Activated T-helper 1 cell treated with anti-CD3 and anti-CD28 coated beads, Interleukin-12 subunit alpha, Interleukin-12 subunit beta, Interleukin-2, Interleukin-4 antibody, amounts not matched to agents 30 ng/mL and 10 ng/mL and 1 ng/mL, durations not matched to agents 14 hours and 24 hours and 36 hours (primary cell): ENCODE measurements at regions of chrX and their contacts with region 1.

Region 1: DNA sequence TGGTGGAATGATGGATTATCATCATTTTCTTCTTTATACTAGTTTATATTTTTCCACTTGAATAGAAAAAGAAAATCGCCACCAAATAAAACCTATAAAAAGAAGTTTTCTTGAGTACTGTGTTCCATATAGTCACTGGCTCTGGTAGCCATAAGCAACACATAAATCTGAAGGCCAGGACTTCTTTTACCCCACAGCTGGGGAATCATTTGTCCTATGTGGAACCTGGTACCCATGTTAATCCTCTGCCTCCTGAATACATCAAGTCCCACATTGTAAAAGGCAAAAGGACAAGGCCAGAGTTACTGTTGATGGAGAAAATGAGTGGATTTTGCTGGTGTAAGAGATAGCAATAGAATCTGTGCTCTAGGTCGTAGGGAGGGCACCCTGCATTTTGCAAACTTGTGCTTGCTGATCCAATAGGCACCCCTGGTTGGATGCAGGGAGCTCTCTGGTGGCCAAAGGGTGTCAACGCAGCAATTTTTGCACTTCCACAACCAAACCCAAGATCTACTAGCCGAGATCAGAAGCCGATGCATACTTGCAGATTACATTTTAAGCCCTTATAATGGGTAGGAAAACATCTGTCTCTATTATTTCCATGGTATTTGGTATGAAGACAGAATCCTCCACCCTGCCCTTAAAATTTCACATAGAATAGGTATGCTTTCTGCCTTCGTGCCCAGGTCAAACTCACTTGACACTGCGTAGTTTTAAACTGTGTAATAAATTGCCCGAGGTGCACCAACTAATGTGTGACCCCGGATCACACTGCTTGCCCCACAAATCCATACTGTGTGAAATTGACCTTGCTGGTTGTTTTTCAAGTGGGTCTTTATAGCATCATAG is 146.2 kb upstream of the SCML1 start:
- DNase-seq: peak; percentile 6
- H3K4me3 Mint-ChIP-seq: no peak overlapping the region
- H3K27ac Mint-ChIP-seq: no peak overlapping the region
- H3K4me1 Mint-ChIP-seq: peaks cover 23% of the 10 kb centered on the region
- H3K27me3 Mint-ChIP-seq: no peaks in the 10 kb centered on the region

Region 2: DNA sequence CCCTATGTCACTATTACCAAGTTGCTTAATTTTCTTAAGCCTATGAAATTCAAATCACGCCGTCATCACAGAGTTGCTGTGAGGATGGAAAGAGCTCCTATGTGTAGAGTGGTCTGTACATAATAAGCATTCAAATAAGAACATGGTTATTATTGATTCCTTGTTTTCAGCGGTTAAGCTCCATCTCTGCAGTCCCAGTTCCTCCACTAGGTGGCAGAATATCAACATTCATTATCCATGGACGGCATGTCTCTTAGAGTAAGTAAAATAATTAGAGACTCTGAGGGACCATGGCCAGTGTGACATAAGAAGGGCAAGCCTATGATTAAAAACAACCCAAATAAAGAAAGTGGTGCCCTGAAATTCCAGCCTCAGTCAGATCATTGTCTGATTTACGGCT is 348.6 kb before region 1 on chrX:
- intact Hi-C with region 1: loop called (anchors 1 kb)
- DNase-seq: no peak
- H3K4me3 Mint-ChIP-seq: no peak overlapping the region
- H3K27ac Mint-ChIP-seq: no peak overlapping the region
- H3K4me1 Mint-ChIP-seq: no peaks in the 10 kb centered on the region
- H3K27me3 Mint-ChIP-seq: no peaks in the 10 kb centered on the region

Region 3: DNA sequence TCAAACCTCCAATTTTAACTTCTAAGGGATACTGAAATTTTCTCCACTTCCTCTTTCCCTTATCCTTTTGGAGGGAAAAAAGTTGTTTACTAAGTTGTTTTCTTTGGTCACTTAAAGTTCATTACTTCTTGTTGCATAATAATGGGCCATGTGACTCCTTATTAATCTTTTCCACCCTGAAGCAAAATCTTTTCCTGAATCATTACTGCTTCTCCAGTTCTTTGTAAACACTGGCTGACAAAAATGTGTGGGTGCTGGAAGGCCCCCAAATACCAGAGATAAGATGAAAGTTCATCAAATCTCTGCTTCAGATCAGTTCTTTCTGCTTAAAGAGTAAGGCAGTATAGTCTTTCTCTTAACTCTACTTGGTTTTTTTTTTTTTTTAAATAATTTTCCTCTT is 325.0 kb before region 1 on chrX:
- intact Hi-C with region 1: no loop called
- DNase-seq: no peak
- H3K4me3 Mint-ChIP-seq: no peak overlapping the region
- H3K27ac Mint-ChIP-seq: no peak overlapping the region
- H3K4me1 Mint-ChIP-seq: no peaks in the 10 kb centered on the region
- H3K27me3 Mint-ChIP-seq: no peaks in the 10 kb centered on the region

Region 4: DNA sequence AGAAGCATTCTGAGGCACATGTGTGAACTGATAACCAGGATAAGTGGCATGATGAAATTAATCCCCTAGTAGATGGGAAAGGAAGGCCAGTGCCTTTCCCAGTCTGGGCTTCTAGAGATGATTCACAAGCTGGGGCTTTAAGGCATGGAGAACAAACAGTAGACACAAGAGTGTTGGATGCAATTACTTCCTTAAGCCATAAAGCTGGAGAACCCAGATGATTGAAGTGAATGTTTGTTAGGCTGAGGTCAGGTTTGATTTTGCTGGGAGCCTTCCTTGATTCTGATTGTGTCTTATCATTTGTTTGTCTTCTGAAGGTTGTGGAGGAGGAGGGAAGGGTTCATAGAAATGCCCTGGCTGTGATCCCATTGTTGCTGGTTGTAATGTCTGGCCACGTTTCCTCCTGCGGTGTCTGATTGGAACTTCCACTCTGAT is 91.0 kb before region 1 on chrX:
- intact Hi-C with region 1: no loop called
- DNase-seq: no peak
- H3K4me3 Mint-ChIP-seq: no peak overlapping the region
- H3K27ac Mint-ChIP-seq: no peak overlapping the region
- H3K4me1 Mint-ChIP-seq: no peaks in the 10 kb centered on the region
- H3K27me3 Mint-ChIP-seq: no peaks in the 10 kb centered on the region

Region 5: DNA sequence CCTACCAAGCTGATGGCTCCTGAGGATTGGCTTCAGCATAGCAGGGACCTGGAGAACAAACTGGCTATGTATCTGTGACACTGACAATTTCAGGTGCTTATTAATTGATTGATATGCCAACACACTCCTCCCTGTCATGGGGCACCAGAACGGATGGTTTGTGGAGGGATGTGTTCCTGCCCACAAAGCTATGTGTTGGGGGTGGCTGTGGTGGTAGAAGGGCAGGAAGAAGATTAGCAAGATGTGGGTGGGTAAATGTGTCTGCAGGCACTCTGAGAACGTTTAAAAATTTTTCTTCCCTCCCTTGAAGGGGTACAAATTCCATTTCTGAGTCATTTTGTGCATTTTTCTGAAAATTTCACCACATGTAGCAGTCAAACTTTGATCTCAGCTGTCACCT is 91.1 kb after region 1 on chrX:
- intact Hi-C with region 1: loop called (anchors 2 kb)
- DNase-seq: no peak
- H3K4me3 Mint-ChIP-seq: peak overlapping the region; percentile 30
- H3K27ac Mint-ChIP-seq: peak overlapping the region; percentile 69
- H3K4me1 Mint-ChIP-seq: peaks cover 29% of the 10 kb centered on the region
- H3K27me3 Mint-ChIP-seq: no peaks in the 10 kb centered on the region

Region 6: GRCh38 chrX:17689971-17690409 is 98.9 kb after region 1 on chrX:
- intact Hi-C with region 1: loop called (anchors 1 kb)
- DNase-seq: peak; percentile 7
- H3K4me3 Mint-ChIP-seq: no peak overlapping the region
- H3K27ac Mint-ChIP-seq: no peak overlapping the region
- H3K4me1 Mint-ChIP-seq: no peaks in the 10 kb centered on the region
- H3K27me3 Mint-ChIP-seq: peaks cover 2% of the 10 kb centered on the region